ENCODE measurements at regions of chr19 and their contacts with region 1.

Region 1: DNA sequence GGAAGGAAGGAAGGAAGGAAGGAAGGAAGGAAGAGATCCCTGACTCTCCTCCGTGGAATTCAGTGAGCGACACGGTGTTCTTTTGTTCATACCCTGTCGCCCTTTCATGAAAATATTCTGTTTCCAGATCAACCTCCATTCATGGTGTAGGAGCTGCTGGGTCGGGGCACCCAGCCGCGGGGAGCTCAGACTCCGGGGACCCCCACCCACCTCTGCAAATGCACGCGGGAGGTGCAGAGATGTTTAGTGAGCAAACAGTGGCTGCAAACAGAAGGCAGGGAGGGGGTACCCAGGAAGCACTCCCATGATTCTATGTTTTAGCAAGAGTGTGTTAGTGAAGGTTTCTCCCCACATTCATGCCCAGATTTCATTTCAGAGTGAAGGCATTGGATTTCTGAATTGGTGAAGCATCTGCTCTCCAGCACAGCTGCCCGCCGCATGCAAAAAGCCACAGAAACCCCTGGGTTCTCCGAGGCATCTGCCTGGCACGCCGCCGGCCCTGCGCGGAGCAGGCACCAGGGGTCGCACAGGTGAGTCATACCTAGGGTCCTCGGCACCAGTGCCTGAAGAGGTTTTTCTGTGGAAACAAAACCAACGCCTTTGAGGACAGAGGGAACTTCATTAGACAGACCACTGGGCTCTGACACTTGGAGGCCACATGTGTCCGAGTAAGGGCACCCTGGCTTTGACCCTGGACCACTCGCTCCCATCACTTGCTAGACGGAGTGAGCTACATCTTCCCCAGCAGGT is 80.6 kb downstream of the ZNF557 start:
- DNase-seq: no peak
- H3K4me3 ChIP-seq: no peak overlapping the region
- H3K27ac ChIP-seq: no peak overlapping the region
- H3K4me1 ChIP-seq: no peaks in the 10 kb centered on the region
- H3K27me3 ChIP-seq: no peaks in the 10 kb centered on the region

Region 2: DNA sequence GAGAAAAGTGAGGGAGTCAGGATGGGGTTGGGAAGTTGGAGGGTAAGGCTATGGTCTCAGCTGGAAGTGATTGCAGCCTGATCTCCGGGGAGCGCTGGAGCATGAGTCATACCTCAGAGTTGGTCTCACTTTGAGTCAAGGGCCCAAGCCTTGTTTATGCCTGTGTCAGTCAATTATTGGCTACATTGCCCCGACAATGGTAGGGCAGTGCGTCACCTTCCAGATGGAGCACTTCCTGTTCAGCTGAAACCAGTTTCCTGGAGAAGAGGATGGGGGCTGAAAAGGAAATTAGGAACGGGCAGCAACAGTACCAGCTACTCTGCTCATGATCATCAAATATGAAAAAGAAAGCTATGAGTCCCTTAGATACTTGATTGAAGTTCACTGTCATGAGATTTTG is 202.4 kb before region 1 on chr19:
- CTCF ChIA-PET with region 1: no interaction called
- POLR2A ChIA-PET with region 1: no interaction called
- DNase-seq: peak in 2 of 3 donors; percentile 55 to 66
- H3K4me3 ChIP-seq: peak overlapping the region in 1 of 7 experiments; percentile 1
- H3K27ac ChIP-seq: no peak overlapping the region
- H3K4me1 ChIP-seq: peaks cover 0 to 5% (median 4%) of the 10 kb centered on the region in 4 experiments
- H3K27me3 ChIP-seq: peaks cover 0 to 2% (median 0%) of the 10 kb centered on the region in 5 experiments

Region 3: DNA sequence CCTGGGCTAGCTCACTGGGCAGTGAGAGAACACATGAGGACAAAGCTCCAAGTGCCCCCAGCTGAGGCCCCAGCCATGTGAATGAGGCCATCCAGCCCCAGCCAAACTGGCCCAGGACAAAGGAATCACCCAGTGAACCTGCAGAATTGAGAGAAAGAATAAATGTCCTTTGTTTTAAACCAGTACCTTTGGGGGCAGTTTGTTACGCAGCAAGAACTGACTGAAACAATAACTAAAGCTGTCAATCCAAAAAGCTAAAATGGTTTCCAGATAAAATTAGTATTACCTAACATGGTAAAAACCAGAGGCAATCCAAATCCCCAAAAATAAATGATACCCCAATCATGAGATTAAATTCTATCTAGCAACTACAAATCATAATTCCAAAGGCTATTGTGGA is 11.0 kb before region 1 on chr19:
- CTCF ChIA-PET with region 1: interaction called, 10 read pairs
- POLR2A ChIA-PET with region 1: no interaction called
- DNase-seq: no peak
- H3K4me3 ChIP-seq: no peak overlapping the region
- H3K27ac ChIP-seq: no peak overlapping the region
- H3K4me1 ChIP-seq: no peaks in the 10 kb centered on the region
- H3K27me3 ChIP-seq: no peaks in the 10 kb centered on the region

Region 4: DNA sequence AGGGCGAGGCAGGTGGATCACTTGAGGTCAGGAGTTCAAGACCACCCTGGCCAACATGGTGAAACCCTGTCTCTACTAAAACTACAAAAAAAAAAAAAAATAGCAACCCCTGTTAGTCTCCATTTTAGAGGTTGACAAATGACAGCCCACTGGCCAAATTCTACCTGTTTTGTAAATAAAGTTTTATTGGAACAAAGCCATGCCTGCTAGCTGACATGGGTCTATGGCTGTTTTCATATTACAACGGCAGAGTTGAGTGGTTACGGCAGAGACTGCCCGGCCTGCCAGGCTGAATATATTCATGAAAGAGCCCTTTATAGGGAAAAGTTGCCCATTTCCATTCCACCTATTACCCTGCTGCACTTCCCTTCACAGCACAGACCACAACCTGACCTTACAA is 22.7 kb after region 1 on chr19:
- CTCF ChIA-PET with region 1: no interaction called
- POLR2A ChIA-PET with region 1: no interaction called
- DNase-seq: no peak
- H3K4me3 ChIP-seq: no peak overlapping the region
- H3K27ac ChIP-seq: no peak overlapping the region
- H3K4me1 ChIP-seq: no peaks in the 10 kb centered on the region
- H3K27me3 ChIP-seq: no peaks in the 10 kb centered on the region

Region 5: DNA sequence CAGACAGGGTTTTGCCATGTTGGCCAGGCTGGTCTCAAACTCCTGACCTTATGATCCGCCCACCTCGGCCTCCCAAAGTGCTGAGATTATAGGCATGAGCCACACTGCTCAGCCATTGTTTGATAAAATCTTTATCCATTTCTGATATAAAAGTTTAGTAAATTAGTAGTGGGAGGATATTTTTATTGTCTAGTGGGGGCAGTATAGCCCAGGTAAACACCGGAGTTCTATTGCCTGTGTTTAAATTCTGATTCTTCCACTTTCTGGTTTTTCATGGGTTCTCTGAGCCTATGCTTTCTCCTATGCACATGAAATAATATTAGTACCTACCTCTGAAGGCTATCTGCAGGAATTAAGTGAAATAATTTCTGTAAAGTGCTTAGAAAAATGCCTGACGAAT is 178.5 kb after region 1 on chr19:
- CTCF ChIA-PET with region 1: interaction called, 10 read pairs
- POLR2A ChIA-PET with region 1: no interaction called
- DNase-seq: peak in 1 of 3 donors; percentile 46
- H3K4me3 ChIP-seq: no peak overlapping the region
- H3K27ac ChIP-seq: no peak overlapping the region
- H3K4me1 ChIP-seq: peaks cover 0 to 8% (median 3%) of the 10 kb centered on the region in 4 experiments
- H3K27me3 ChIP-seq: no peaks in the 10 kb centered on the region

Measured in common myeloid progenitor, CD34-positive (primary cell).